ENCODE measurements at regions of chr12 and their contacts with region 1.

Region 1: GRCh38 chr12:49527361-49528130 is 11.3 kb upstream of the KCNH3 start:
- DNase-seq: no peak

Region 2: DNA sequence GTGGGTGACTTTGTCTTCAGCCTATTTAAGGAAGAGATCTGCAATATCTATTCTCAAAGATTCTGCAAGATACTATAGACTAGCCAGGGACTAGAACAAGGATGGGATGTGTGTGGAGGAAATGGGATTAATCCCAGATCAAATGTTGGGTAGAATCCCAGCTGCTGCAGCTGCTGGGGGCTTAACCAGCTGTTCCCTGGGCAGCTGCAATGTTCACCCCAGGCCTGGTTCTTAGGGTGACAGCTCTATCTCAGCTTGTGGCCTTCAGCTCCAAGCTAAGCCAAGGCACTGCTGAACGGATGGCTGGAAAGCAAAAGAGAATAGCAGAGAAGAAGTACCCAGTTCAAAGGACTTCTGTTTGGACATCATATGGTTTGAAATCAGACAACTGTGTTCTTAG is 447.8 kb before region 1 on chr12:
- in situ Hi-C with region 1: no loop called
- DNase-seq: no peak

Region 3: GRCh38 chr12:49358483-49359141 is 168.9 kb before region 1 on chr12:
- in situ Hi-C with region 1: loop called (anchors 10 kb)
- DNase-seq: peak; percentile 89